ENCODE measurements at regions of chr1 and their contacts with region 1.

Region 1: GRCh38 chr1:110948038-110948810 is 15.5 kb downstream of the LRIF1 start:
- DNase-seq: no peak
- ATAC-seq: no peak
- H3K4me3 ChIP-seq: no peak overlapping the region
- H3K4me3 Mint-ChIP-seq: no peak overlapping the region
- H3K27ac ChIP-seq: no peak overlapping the region
- H3K27ac Mint-ChIP-seq: no peak overlapping the region
- H3K4me1 ChIP-seq: no peaks in the 10 kb centered on the region
- H3K4me1 Mint-ChIP-seq: no peaks in the 10 kb centered on the region
- H3K27me3 ChIP-seq: no peaks in the 10 kb centered on the region
- H3K27me3 Mint-ChIP-seq: no peaks in the 10 kb centered on the region

Region 2: GRCh38 chr1:110630839-110631663 is 317.2 kb before region 1 on chr1:
- CTCF ChIA-PET with region 1: no interaction called
- POLR2A ChIA-PET with region 1: interaction called in 1 of 2 experiments, 12 read pairs
- DNase-seq: peak; percentile 63 to 93 (median 79)
- ATAC-seq: peak; percentile 78 to 84 (median 80)
- H3K4me3 ChIP-seq: peak overlapping the region; percentile 19 to 36
- H3K4me3 Mint-ChIP-seq: no peak overlapping the region
- H3K27ac ChIP-seq: peak overlapping the region; percentile 88
- H3K27ac Mint-ChIP-seq: no peak overlapping the region
- H3K4me1 ChIP-seq: peaks cover 38 to 66% of the 10 kb centered on the region in 2 experiments
- H3K4me1 Mint-ChIP-seq: peaks cover 42 to 62% (median 53%) of the 10 kb centered on the region in 3 donors
- H3K27me3 ChIP-seq: no peaks in the 10 kb centered on the region
- H3K27me3 Mint-ChIP-seq: no peaks in the 10 kb centered on the region

Measured in T-cell (primary cell).